Brain microvascular endothelial cell (primary cell): ENCODE measurements at regions of chr11 and their contacts with region 1.

Region 1: GRCh38 chr11:1049431-1049891 is 12.9 kb upstream of the MUC6 start:
- DNase-seq: no peak
- H3K4me3 ChIP-seq: no peak overlapping the region
- H3K27ac ChIP-seq: no peak overlapping the region
- H3K27me3 ChIP-seq: peaks cover 1% of the 10 kb centered on the region
- CTCF ChIP-seq: no peak

Region 2: DNA sequence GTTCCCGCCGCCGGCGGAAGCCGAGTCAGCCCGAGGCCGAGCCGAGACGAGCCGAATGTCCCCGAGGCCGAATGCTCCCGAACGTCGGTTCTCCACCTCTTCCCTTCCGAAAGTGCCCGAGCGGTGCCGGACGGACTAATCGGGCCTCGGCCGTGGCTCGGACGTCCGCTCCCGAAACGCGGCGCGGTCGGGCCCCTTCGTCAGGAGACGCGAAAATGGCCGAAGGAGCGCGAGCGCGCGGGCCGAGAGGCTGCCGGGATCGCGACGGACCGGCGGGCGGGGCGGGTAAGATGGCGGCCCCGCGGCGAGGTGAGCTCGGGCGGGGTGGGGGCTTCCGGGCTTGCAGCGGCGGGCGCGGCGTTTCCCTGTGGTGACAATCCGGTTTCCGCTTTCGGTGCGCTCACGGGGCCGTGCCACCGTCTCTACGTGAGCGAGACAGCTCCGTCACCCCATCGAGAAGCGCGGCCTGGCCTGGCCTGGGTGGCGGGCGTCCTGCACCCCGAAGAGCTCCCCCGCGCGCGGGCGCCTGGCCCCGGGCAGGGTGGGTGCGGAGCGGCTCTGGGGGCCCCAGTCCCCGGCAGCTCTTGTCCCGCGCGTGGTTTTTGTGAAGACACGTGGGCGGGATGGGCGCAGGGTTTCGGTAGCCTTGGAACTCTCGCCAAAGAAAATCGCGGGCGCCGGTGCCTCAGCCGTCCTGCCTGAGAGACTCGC is 353.8 kb before region 1 on chr11 and contains the start of gene TMEM80:
- in situ Hi-C with region 1: no loop called
- DNase-seq: peak; percentile 96
- H3K4me3 ChIP-seq: peak within 1 kb of the TSS; percentile 77
- H3K27ac ChIP-seq: peak within 1 kb of the TSS; percentile 99
- H3K27me3 ChIP-seq: no peaks in the 10 kb centered on the region
- CTCF ChIP-seq: no peak

Region 3: GRCh38 chr11:910589-911195 is 138.8 kb before region 1 on chr11 and contains the start of gene CHID1:
- in situ Hi-C with region 1: loop called (anchors 25 kb)
- DNase-seq: peak; percentile 45
- H3K4me3 ChIP-seq: peak within 1 kb of the TSS; percentile 82
- H3K27ac ChIP-seq: peak within 1 kb of the TSS; percentile 86
- H3K27me3 ChIP-seq: no peaks in the 10 kb centered on the region
- CTCF ChIP-seq: no peak

Region 4: GRCh38 chr11:1168721-1169161 is 119.3 kb after region 1 on chr11:
- in situ Hi-C with region 1: no loop called
- DNase-seq: no peak
- H3K4me3 ChIP-seq: no peak overlapping the region
- H3K27ac ChIP-seq: no peak overlapping the region
- H3K27me3 ChIP-seq: no peaks in the 10 kb centered on the region
- CTCF ChIP-seq: no peak